ENCODE measurements at regions of chr3 and their contacts with region 1.

Region 1: DNA sequence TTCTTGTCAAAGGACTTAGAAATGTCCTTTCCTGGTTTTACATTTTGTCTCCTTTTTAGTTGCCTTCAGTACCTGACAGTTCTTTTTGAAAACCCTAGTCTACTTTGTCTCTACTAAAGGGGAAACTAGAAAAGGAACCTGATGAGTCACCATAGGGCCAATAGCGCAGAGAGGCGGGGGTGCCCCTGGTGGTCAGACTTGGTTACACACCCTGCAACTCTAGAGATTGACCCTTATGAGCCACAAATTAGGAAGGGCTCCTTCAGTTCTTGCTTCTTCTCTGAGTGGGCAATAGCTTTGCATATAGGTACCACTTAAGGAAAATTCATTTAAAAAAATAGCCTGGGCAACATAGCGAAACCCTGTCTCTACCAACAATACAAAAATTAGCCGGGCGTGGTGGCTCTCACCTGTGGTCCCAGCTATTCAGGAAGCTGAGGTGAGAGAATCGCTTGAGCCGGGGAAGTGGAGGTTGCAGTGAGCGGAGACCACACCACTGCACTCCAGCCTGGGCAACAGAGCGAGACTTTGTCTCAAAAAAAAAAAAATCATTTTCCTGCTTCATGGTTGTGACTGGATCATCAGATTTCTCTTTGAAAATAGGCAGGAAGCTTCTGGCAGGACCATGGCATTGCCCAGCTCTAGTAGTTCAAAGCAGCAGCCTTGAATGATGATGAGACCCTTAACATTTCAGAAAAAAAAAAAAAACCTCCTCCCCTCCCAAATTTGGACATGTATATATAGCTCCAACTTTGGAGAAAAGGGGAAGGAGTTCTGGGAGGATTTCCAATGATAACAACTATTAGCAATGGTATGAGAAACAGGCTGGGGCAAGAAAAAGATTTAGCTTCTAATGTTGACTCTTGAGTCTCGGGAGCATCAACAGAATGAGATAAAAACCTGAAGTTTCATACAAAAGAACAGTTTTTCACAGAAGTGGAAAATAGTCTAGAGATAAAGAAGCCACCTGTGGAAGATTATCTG is 45.2 kb upstream of the RASA2 start:
- DNase-seq: peak; percentile 54
- H3K4me3 Mint-ChIP-seq: no peak overlapping the region
- H3K27ac Mint-ChIP-seq: no peak overlapping the region
- H3K4me1 Mint-ChIP-seq: peaks cover 12% of the 10 kb centered on the region
- H3K27me3 Mint-ChIP-seq: no peaks in the 10 kb centered on the region

Region 2: GRCh38 chr3:141311496-141312353 is 129.9 kb before region 1 on chr3:
- CTCF ChIA-PET with region 1: interaction called, 12 read pairs
- POLR2A ChIA-PET with region 1: no interaction called
- DNase-seq: peak; percentile 99
- H3K4me3 Mint-ChIP-seq: peak overlapping the region; percentile 90
- H3K27ac Mint-ChIP-seq: peak overlapping the region; percentile 96
- H3K4me1 Mint-ChIP-seq: peaks cover 59% of the 10 kb centered on the region
- H3K27me3 Mint-ChIP-seq: no peaks in the 10 kb centered on the region

Region 3: GRCh38 chr3:141360888-141361598 is 80.6 kb before region 1 on chr3:
- CTCF ChIA-PET with region 1: interaction called, 20 read pairs
- POLR2A ChIA-PET with region 1: no interaction called
- DNase-seq: peak; percentile 44
- H3K4me3 Mint-ChIP-seq: no peak overlapping the region
- H3K27ac Mint-ChIP-seq: peak overlapping the region; percentile 3
- H3K4me1 Mint-ChIP-seq: peaks cover 11% of the 10 kb centered on the region
- H3K27me3 Mint-ChIP-seq: peaks cover 2% of the 10 kb centered on the region

Region 4: DNA sequence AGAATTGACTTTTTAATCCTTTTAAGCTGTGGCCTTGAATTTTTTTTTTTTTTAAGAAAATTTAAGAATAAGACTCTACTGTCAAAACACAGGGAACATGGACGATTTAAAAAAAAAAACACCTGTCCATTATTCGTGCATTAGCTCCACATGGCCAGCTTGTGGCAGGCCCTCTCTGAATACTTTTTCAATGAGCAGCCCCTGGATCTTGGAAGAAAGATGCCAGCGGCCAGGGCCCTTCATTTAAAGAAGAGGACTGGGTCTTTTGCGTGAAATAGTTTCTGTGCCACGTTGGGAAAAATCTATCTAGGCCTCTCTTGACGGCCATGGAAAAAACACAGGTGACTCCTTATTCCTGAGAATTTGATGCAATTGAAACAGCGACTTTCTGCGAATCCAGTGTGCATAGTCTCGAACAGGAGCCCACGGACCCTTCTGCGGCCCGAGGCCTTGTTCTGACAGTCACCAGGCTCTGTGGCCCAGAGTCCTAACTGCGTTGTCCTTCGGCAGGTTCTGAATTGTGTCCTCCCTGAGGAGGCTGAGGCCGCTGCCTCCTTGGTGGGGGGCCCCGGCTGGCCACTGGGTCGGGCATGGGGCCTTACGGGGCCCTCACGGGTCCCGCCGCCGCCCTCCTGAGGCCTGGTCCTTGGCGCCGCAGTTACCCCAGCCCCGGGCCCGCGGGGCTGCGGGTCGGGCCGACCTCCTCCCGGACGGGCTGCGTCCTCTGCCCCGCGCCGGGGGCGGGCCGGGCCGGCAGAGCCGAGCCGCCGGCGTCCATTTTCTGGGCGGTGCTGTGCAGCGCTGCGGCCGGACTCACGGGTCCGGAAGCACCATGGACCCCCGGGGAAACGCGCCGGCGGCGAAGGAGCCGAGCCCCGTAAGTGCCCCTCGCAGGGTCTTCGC is 39.8 kb before region 1 on chr3:
- CTCF ChIA-PET with region 1: no interaction called
- POLR2A ChIA-PET with region 1: no interaction called
- DNase-seq: peak; percentile 43
- H3K4me3 Mint-ChIP-seq: peak overlapping the region; percentile 71
- H3K27ac Mint-ChIP-seq: peak overlapping the region; percentile 87
- H3K4me1 Mint-ChIP-seq: peaks cover 32% of the 10 kb centered on the region
- H3K27me3 Mint-ChIP-seq: no peaks in the 10 kb centered on the region

Region 5: DNA sequence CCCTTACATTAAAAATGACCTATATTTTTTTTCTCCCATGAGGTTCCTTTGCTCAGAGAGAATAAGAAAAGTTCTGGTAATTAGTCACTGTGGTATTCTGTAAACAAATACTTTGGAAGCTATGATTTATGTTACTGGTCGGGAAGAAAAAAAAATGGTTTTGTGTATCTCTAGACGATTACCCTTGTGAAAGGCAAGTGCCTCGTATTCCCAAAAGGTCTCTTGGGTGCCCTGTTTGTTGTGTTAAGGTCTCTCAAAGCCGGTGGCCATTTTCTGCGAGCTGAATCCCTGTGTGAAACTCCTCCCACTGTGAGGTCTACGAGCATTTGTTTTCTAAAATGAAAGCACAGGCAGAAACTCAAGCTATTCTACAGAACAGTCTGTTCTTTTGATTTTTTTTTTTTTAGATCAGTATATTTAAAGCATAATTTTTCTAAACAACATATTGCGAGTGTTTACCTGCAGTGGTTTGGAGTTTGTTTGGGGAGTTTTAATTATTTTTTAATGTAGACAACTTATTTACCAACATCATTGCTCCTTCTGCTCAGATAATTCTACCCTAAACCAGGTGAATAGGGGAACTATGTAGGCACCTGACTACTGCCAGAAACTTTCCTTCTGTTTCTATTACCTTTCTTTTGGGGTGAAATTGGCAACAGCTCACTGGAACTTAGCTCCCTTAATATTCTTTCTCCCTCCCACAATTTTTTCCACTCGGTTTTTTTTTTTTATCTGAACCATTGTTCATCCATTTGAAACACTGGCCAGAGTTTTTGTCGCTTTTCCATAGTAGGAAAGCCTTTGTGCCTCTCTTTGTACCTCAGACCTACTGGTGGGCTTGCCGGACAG is 29.4 kb before region 1 on chr3:
- CTCF ChIA-PET with region 1: interaction called, 13 read pairs
- POLR2A ChIA-PET with region 1: no interaction called
- DNase-seq: peak; percentile 75
- H3K4me3 Mint-ChIP-seq: peak overlapping the region; percentile 69
- H3K27ac Mint-ChIP-seq: peak overlapping the region; percentile 100
- H3K4me1 Mint-ChIP-seq: peaks cover 67% of the 10 kb centered on the region
- H3K27me3 Mint-ChIP-seq: no peaks in the 10 kb centered on the region

Region 6: GRCh38 chr3:141426404-141427034 is 15.2 kb before region 1 on chr3:
- CTCF ChIA-PET with region 1: interaction called, 28 read pairs
- POLR2A ChIA-PET with region 1: no interaction called
- DNase-seq: no peak
- H3K4me3 Mint-ChIP-seq: no peak overlapping the region
- H3K27ac Mint-ChIP-seq: peak overlapping the region; percentile 50
- H3K4me1 Mint-ChIP-seq: peaks cover 3% of the 10 kb centered on the region
- H3K27me3 Mint-ChIP-seq: no peaks in the 10 kb centered on the region

Region 7: GRCh38 chr3:141452036-141452435 is 10.4 kb after region 1 on chr3:
- CTCF ChIA-PET with region 1: interaction called, 40 read pairs
- POLR2A ChIA-PET with region 1: no interaction called
- DNase-seq: peak; percentile 73
- H3K4me3 Mint-ChIP-seq: no peak overlapping the region
- H3K27ac Mint-ChIP-seq: no peak overlapping the region
- H3K4me1 Mint-ChIP-seq: peaks cover 11% of the 10 kb centered on the region
- H3K27me3 Mint-ChIP-seq: no peaks in the 10 kb centered on the region

Region 8: GRCh38 chr3:141594357-141594756 is 152.7 kb after region 1 on chr3:
- CTCF ChIA-PET with region 1: no interaction called
- POLR2A ChIA-PET with region 1: no interaction called
- DNase-seq: no peak
- H3K4me3 Mint-ChIP-seq: no peak overlapping the region
- H3K27ac Mint-ChIP-seq: no peak overlapping the region
- H3K4me1 Mint-ChIP-seq: no peaks in the 10 kb centered on the region
- H3K27me3 Mint-ChIP-seq: no peaks in the 10 kb centered on the region

Measured in activated CD4-positive, alpha-beta T cell treated with anti-CD3 and anti-CD28 coated beads, Interleukin-2, amount 10 ng/mL, durations not matched to agents 7 days and 5 days (primary cell).